Aorta (tissue), 5 donors: ENCODE measurements at regions of chr12 and their contacts with region 1.

Region 1: DNA sequence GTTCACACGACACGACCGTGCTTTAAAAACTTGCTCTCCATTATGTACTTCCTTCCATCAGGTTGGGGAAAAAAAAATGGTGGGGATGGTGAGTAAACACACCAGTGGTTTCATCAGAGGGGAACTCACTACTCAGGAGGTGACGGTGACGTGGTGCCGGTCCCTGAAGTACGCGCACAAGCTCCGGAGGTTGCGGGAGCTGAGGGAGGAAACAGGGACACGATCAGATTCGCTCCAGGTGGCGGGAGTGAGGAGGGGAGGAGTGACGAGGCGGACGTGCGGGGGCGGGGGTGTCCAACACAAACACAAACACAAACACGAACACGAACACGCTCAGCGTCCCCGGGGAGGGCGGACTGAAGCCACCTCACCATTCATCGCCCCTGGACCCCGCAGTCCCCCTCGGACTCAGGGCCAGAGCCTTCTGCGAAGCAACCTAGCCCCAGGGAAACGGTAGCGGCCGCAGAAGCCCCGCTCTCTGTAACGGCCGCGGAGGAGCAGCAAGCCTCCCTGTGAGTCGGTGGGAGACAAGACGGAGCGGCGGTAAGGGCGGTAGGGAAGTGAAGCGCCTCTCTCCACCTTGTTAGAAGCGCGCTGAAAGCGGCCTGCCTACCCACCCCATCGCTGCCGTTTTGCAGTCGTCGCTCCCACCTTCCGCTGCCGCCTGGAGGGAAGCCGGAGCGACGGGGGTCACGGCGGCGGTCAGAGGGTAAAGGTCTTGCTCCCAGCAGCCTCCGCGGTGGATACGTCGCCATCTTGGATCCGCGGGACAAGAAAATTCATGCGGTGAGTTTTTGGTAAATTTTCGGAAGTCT is at the start of gene CNOT2:
- DNase-seq: peak; percentile 94 to 97
- ATAC-seq: peak; percentile 97
- H3K4me3 ChIP-seq: peak within 1 kb of the TSS; percentile 87 to 89
- H3K27ac ChIP-seq: peak within 1 kb of the TSS; percentile 83
- H3K4me1 ChIP-seq: peaks cover 0 to 7% of the 10 kb centered on the region in 2 donors
- H3K27me3 ChIP-seq: no peaks in the 10 kb centered on the region
- total RNA-seq, gene CNOT2: 76.6 to 108 TPM

Region 2: GRCh38 chr12:69985656-69986055 is 257.2 kb before region 1 on chr12:
- intact Hi-C with region 1: loop called (anchors 5 to 10 kb)
- DNase-seq: peak in 1 of 2 donors; percentile 57
- ATAC-seq: no peak
- H3K4me3 ChIP-seq: no peak overlapping the region
- H3K27ac ChIP-seq: no peak overlapping the region
- H3K4me1 ChIP-seq: no peaks in the 10 kb centered on the region
- H3K27me3 ChIP-seq: no peaks in the 10 kb centered on the region

Region 3: GRCh38 chr12:69991341-69992288 is 251.3 kb before region 1 on chr12:
- intact Hi-C with region 1: loop called (anchors 5 to 10 kb)
- DNase-seq: no peak
- ATAC-seq: no peak
- H3K4me3 ChIP-seq: no peak overlapping the region
- H3K27ac ChIP-seq: peak overlapping the region in 1 of 2 donors; percentile 75
- H3K4me1 ChIP-seq: no peaks in the 10 kb centered on the region
- H3K27me3 ChIP-seq: no peaks in the 10 kb centered on the region

Region 4: DNA sequence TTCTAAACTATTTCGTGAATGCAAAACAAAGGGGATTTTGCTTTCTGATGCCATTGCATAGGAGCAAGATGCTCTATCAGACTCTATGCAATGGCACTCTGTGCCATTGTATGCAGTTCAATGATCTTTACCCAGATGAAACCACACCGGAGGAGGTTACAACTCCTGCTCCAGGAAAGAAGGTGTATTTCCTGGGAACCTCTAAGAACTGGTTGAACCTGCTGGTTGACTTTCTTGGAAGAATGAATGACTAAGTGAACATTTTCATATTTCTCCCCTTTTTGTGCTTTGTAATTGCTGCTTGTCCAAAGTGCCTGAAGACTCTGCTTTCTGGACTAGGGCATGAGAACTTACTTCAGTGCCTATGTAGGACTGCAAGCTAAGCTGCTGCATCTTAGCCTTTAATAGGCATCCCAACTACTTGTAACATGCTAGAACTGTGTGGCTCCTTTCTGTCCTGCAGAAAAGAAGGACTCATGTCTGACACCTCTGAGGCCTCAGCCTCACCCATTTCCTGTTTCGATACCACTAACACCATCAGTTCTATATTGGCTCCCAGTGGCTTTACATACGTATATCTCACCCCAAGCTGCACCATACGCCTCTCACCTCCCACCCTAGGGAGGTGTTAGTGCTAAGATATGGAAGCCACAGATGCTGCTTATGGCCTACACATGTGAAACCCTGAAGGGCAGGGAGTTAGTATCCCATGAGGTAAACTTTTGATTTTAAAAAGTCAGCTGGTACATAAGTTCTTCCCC is 193.1 kb before region 1 on chr12:
- intact Hi-C with region 1: loop called in 1 of 2 experiments (anchors 5 kb)
- DNase-seq: no peak
- ATAC-seq: no peak
- H3K4me3 ChIP-seq: no peak overlapping the region
- H3K27ac ChIP-seq: no peak overlapping the region
- H3K4me1 ChIP-seq: peaks cover 0 to 2% of the 10 kb centered on the region in 2 donors
- H3K27me3 ChIP-seq: no peaks in the 10 kb centered on the region

Region 5: DNA sequence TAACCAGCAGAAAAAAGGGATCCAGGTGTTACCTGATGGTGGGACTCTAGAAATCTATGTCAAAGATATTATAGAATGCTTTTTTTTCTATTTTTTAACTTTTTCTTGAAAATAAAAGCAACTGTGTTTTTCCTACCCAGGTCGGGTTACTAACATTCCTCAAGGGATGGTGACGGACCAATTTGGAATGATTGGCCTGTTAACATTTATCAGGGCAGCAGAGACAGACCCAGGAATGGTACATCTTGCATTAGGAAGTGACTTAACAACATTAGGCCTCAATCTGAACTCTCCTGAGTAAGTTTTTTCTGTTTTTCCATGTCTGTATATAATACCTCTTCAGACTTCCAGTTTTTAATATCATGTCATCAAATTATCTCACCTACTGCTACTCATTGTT is 95.6 kb after region 1 on chr12:
- intact Hi-C with region 1: loop called in 1 of 2 experiments (anchors 10 kb)
- DNase-seq: no peak
- ATAC-seq: no peak
- H3K4me3 ChIP-seq: no peak overlapping the region
- H3K27ac ChIP-seq: no peak overlapping the region
- H3K4me1 ChIP-seq: no peaks in the 10 kb centered on the region
- H3K27me3 ChIP-seq: no peaks in the 10 kb centered on the region

Region 6: GRCh38 chr12:70365648-70366518 is 123.0 kb after region 1 on chr12 and contains the start of gene KCNMB4:
- intact Hi-C with region 1: loop called (anchors 2 to 5 kb)
- DNase-seq: peak; percentile 68 to 88
- ATAC-seq: peak; percentile 89
- H3K4me3 ChIP-seq: peak within 1 kb of the TSS; percentile 92 to 98
- H3K27ac ChIP-seq: no peak within 1 kb of the TSS
- H3K4me1 ChIP-seq: no peaks in the 10 kb centered on the region
- H3K27me3 ChIP-seq: no peaks in the 10 kb centered on the region
- total RNA-seq, gene KCNMB4: 2.0 to 3.3 TPM

Region 7: DNA sequence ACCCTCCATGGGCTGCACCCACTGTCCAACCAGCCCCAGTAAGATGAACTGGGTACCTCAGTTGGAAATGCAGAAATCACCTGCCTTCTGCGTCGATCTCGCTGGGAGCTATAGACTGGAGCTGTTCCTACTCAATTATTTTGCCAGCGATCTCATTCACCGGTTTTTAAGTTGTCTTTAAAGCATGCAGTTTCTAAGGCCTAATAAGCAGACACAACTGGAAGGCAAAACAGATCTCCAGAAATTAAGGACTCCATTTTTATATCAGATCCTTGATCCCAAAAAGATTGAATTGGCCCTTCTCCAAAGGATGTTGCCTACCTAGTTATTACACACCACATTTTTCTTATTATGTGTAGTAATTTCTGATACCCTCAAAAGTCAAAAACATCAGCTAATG is 254.6 kb after region 1 on chr12:
- intact Hi-C with region 1: no loop called
- DNase-seq: no peak
- ATAC-seq: no peak
- H3K4me3 ChIP-seq: no peak overlapping the region
- H3K27ac ChIP-seq: no peak overlapping the region
- H3K4me1 ChIP-seq: no peaks in the 10 kb centered on the region
- H3K27me3 ChIP-seq: no peaks in the 10 kb centered on the region

Region 8: GRCh38 chr12:70994217-70994788 is 751.4 kb after region 1 on chr12:
- intact Hi-C with region 1: loop called in 1 of 2 experiments (anchors 5 kb)
- DNase-seq: no peak
- ATAC-seq: peak; percentile 87
- H3K4me3 ChIP-seq: no peak overlapping the region
- H3K27ac ChIP-seq: peak overlapping the region; percentile 79 to 83
- H3K4me1 ChIP-seq: peaks cover 5 to 8% of the 10 kb centered on the region in 2 donors
- H3K27me3 ChIP-seq: no peaks in the 10 kb centered on the region